Activated CD4-positive, alpha-beta T cell treated with anti-CD3 and anti-CD28 coated beads for 36 hours (primary cell): ENCODE measurements at regions of chr1 and their contacts with region 1.

Region 1: DNA sequence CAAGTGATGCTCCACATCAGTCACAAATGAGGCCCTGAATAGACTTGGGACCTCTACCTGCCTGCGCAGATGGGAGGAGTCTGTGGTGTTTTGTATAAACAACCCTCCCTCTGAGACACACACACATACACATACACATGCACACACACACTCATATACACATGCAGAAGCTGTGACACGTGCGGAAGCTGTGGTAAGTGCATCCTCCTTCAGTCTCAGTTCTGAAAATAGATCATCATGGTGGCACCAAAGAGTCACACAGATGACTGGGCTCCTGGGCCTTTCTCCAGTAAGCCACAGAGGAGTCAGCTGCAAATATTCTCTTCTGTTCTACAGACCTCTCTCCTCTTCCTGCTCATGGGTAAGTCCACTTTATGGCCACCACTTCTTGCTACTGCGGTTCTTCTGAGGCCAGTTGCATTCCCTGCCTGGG is at the start of gene LY9:
- DNase-seq: peak; percentile 89
- ATAC-seq: peak; percentile 79
- H3K4me3 Mint-ChIP-seq: peak within 1 kb of the TSS; percentile 78
- H3K27ac Mint-ChIP-seq: peak within 1 kb of the TSS; percentile 95
- H3K4me1 Mint-ChIP-seq: peaks cover 61% of the 10 kb centered on the region
- H3K27me3 Mint-ChIP-seq: no peaks in the 10 kb centered on the region
- total RNA-seq, gene LY9: 10.0 to 11.0 TPM

Region 2: DNA sequence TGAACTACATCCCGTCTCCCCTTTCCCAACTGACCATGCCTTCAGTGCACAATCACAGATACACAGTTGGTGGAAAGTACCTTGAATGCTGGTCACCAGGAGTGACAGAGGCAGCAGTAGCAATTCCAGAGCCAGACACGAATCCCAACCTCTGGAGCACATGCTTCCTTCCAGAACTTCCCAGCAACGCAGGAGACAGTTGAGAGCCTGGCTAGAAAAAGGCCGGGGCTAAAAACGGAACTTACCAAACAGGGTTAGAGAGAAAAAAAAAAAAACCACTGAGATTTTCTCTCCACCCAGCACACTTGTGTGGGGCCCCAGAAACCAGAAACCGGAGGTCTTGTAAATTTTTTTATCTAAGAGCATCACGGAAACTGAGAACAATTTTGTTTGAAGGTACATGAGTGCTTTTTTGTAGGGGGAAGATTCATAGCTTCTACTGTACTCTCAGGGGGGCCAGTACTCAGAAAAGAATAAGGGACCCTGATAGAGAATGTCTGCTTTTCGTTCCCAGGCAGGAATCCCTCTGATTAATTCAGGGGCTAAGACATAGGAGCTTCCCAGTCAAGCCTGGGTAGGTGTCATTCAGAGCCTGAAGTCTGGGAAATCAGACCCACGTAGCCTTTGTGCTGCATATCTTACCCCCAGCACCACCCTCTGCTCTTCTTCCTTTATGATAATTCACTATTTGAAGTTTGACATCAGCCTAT is 84.2 kb before region 1 on chr1 and contains the start of gene CD48:
- CTCF ChIA-PET with region 1: interaction called, 5 read pairs
- POLR2A ChIA-PET with region 1: interaction called, 4 read pairs
- intact Hi-C with region 1: loop called in 1 of 2 experiments (anchors 2 kb)
- DNase-seq: peak; percentile 70
- ATAC-seq: peak; percentile 40
- H3K4me3 Mint-ChIP-seq: no peak within 1 kb of the TSS
- H3K27ac Mint-ChIP-seq: no peak within 1 kb of the TSS
- H3K4me1 Mint-ChIP-seq: peaks cover 34% of the 10 kb centered on the region
- H3K27me3 Mint-ChIP-seq: no peaks in the 10 kb centered on the region
- total RNA-seq, gene CD48: 180 to 217 TPM

Region 3: GRCh38 chr1:160806109-160806665 is 10.2 kb after region 1 on chr1:
- CTCF ChIA-PET with region 1: interaction called, 31 read pairs
- POLR2A ChIA-PET with region 1: no interaction called
- intact Hi-C with region 1: loop called in 1 of 2 experiments (anchors 1 kb)
- DNase-seq: no peak
- ATAC-seq: peak; percentile 76
- H3K4me3 Mint-ChIP-seq: no peak overlapping the region
- H3K27ac Mint-ChIP-seq: peak overlapping the region; percentile 74
- H3K4me1 Mint-ChIP-seq: peaks cover 79% of the 10 kb centered on the region
- H3K27me3 Mint-ChIP-seq: no peaks in the 10 kb centered on the region